Endothelial cell of umbilical vein (primary cell): ENCODE measurements at regions of chr2 and their contacts with region 1.

Region 1: DNA sequence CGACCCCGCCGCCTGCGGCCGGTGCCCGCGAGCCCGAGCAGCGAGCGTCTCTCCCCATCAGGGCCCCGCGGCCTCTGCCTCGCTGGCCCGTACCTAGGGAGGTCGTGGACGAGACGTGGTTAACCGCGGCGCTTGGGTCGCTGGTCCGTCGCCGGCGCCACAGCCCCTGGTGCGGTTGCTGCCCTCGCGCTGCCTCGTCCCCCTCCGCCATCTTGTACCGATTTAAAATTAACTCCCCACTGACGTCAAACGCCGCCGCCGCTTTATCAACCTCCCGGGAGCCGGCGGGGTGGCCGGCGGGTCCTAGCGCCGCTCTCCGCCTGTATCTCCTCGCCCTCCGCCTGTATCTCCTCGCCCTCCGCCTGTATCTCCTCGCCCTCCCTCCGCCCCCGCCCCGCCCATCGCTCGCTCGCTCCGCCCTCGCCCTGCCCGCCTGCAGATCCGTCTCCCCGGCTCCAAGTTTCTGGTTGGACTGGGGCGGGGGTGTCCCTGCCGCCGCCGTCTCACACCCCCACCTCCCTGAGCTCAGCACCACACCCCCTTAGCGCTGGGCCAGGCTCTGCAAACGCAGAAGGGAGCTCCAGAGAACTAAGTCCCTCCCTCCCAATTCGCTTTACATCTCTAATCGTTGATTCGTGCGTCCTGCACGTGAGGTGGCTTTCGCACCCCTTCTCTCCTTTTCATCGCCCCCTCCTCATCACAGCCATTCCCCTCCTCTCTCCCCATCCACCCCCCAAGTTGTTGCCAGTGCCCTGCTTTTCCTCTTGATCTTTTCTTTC is at the start of gene ATL2:
- DNase-seq: peak; percentile 95
- H3K4me3 ChIP-seq: peak within 1 kb of the TSS; percentile 61 to 88 (median 76)
- H3K27ac ChIP-seq: peak within 1 kb of the TSS; percentile 63
- H3K4me1 ChIP-seq: peaks cover 16% of the 10 kb centered on the region
- H3K27me3 ChIP-seq: no peaks in the 10 kb centered on the region
- CTCF ChIP-seq: no peak
- POLR2A ChIP-seq: peak; percentile 76
- total RNA-seq, gene ATL2: 45.5 and 46.3 TPM in 2 replicates

Region 2: DNA sequence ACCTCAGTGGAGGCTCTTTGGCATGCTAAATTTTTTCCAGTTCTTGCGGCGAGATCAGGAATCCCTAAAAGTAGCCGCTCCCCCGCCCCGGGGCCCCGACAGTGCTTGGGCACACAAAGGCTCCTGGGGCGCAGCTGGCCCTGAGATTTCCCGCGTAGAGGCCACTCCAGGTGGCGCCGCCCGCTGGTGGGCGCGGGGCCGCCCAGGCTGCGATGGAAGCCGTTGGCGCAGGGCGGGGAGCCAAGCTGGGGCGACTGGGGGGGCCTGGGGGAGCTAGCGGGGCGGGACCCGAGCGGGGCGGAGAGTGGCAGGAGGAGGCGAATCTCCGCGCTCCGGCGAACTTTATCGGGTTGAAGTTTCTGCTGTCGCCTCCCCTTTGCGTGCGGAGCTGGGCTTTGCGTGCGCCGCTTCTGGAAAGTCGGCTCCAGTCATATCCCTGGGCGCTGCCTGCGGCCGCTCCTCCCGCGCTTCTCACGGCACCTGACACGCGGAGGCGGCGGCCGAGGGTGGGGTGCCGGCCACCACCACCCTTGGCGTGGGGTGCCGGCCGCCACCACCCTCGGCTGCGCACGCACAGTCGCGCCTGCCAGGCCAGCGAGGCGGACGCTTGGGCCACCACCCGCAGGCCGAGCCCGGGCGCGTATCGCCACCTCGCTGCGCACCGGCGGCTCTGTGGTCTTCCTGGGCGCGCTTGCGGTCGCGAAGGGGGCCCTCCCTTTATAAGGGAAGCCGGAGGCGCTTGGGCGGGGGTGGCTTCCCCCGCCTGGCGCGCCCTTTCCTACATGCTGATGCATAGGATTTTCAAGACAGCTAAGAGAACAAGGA is 300.4 kb before region 1 on chr2:
- CTCF ChIA-PET with region 1: no interaction called
- POLR2A ChIA-PET with region 1: no interaction called
- dilution Hi-C with region 1: no loop called
- intact Hi-C with region 1: loop called (anchors 10 kb)
- DNase-seq: no peak
- H3K4me3 ChIP-seq: peak overlapping the region; percentile 30 to 34 (median 32)
- H3K27ac ChIP-seq: no peak overlapping the region
- H3K4me1 ChIP-seq: peaks cover 16% of the 10 kb centered on the region
- H3K27me3 ChIP-seq: peaks cover 44 to 51% of the 10 kb centered on the region in 2 experiments
- CTCF ChIP-seq: peak in 1 of 2 donors; percentile 23
- POLR2A ChIP-seq: no peak

Region 3: GRCh38 chr2:38327580-38327979 is 49.7 kb before region 1 on chr2:
- CTCF ChIA-PET with region 1: interaction called, 22 read pairs
- POLR2A ChIA-PET with region 1: no interaction called
- dilution Hi-C with region 1: no loop called
- intact Hi-C with region 1: loop called (anchors 2 kb)
- DNase-seq: no peak
- H3K4me3 ChIP-seq: no peak overlapping the region
- H3K27ac ChIP-seq: no peak overlapping the region
- H3K4me1 ChIP-seq: peaks cover 4% of the 10 kb centered on the region
- H3K27me3 ChIP-seq: no peaks in the 10 kb centered on the region
- CTCF ChIP-seq: no peak
- POLR2A ChIP-seq: no peak

Region 4: GRCh38 chr2:38508311-38509039 is 131.2 kb after region 1 on chr2:
- CTCF ChIA-PET with region 1: interaction called, 10 read pairs
- POLR2A ChIA-PET with region 1: no interaction called
- dilution Hi-C with region 1: no loop called
- intact Hi-C with region 1: loop called (anchors 2 kb)
- DNase-seq: peak; percentile 79
- H3K4me3 ChIP-seq: no peak overlapping the region
- H3K27ac ChIP-seq: no peak overlapping the region
- H3K4me1 ChIP-seq: peaks cover 3% of the 10 kb centered on the region
- H3K27me3 ChIP-seq: peaks cover 0 to 4% of the 10 kb centered on the region in 2 experiments
- CTCF ChIP-seq: peak; percentile 59 to 61
- POLR2A ChIP-seq: no peak

Region 5: GRCh38 chr2:38665854-38666555 is 288.8 kb after region 1 on chr2 and contains the start of gene GALM:
- CTCF ChIA-PET with region 1: no interaction called
- POLR2A ChIA-PET with region 1: no interaction called
- dilution Hi-C with region 1: no loop called
- intact Hi-C with region 1: loop called (anchors 5 kb)
- DNase-seq: peak; percentile 92
- H3K4me3 ChIP-seq: peak within 1 kb of the TSS; percentile 8 to 46 (median 44)
- H3K27ac ChIP-seq: no peak within 1 kb of the TSS
- H3K4me1 ChIP-seq: peaks cover 3% of the 10 kb centered on the region
- H3K27me3 ChIP-seq: no peaks in the 10 kb centered on the region
- CTCF ChIP-seq: no peak
- POLR2A ChIP-seq: no peak
- total RNA-seq, gene GALM: 5.4 and 6.1 TPM in 2 replicates

Region 6: DNA sequence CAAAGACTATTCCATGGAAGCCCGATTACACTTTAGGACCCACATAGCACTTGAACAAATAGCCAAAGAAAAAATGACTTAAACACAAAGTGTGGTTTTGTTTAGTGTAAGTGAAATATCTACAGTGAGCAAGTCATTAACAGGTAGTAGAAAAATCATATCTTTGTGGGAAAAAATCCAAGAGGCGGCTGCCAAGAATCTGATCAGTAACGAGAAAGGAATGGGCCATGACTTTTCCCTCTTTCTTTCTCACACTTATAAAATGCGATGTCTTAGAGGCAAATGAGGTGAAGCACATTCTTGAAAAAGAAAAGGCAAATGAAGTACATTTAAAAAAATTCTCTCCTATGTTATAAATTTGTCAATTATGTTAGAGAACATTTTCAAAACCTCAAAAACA is 387.9 kb after region 1 on chr2:
- CTCF ChIA-PET with region 1: no interaction called
- POLR2A ChIA-PET with region 1: no interaction called
- dilution Hi-C with region 1: no loop called
- intact Hi-C with region 1: no loop called
- DNase-seq: no peak
- H3K4me3 ChIP-seq: no peak overlapping the region
- H3K27ac ChIP-seq: no peak overlapping the region
- H3K4me1 ChIP-seq: no peaks in the 10 kb centered on the region
- H3K27me3 ChIP-seq: no peaks in the 10 kb centered on the region
- CTCF ChIP-seq: no peak
- POLR2A ChIP-seq: no peak

Region 7: GRCh38 chr2:39124000-39124745 is 746.9 kb after region 1 on chr2:
- CTCF ChIA-PET with region 1: interaction called, 4 read pairs
- POLR2A ChIA-PET with region 1: no interaction called
- dilution Hi-C with region 1: no loop called
- intact Hi-C with region 1: loop called (anchors 5 kb)
- DNase-seq: peak; percentile 97
- H3K4me3 ChIP-seq: peak overlapping the region; percentile 53 to 96 (median 89)
- H3K27ac ChIP-seq: peak overlapping the region; percentile 45
- H3K4me1 ChIP-seq: peaks cover 18% of the 10 kb centered on the region
- H3K27me3 ChIP-seq: no peaks in the 10 kb centered on the region
- CTCF ChIP-seq: peak; percentile 28 to 86
- POLR2A ChIP-seq: peak; percentile 96